CD8-positive, alpha-beta T cell (primary cell): ENCODE measurements at regions of chr2 and their contacts with region 1.

Region 1: DNA sequence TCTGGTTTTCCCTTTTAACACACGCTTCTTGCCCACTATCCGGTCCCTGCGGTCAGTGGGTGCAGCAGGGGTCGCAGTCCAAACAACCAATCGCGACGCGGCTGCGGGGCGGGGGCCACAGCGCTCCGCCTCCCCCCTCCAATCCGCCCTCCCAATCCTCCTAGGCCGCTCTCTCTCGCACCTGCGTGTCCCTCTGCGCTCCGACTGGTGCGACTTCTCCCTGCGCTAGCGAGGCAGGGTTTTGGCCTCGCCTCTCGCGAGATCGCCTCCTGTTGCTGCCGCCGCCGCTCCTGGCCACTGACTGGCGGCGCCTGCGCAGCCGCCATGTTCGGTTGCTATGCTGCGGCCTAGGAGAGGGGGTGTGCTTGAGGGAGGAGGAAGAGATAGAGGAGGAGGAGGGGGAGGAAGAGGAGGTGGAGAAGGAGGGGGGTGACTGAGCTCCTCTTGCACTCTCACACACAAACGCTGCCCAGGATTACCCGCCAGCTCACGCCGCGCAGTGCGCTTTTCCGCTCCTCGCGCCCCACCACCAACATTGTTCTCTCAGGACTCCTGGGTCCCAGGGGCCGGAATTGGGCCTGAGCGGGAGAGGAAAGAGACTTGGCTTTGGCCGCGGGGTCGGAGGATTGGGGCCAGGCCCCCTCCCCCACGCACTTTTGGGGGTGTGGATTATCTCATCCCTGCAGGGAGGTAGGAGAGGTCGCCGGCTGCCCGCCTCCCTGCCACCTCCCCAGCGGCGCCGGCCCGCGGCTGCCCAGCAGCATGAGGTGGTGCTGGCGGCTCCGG is at the start of gene PTPN4:
- DNase-seq: peak; percentile 91 to 99 (median 95)
- ATAC-seq: peak; percentile 90
- H3K4me3 ChIP-seq: peak within 1 kb of the TSS; percentile 83
- H3K4me3 Mint-ChIP-seq: peak within 1 kb of the TSS; percentile 95
- H3K27ac ChIP-seq: peak within 1 kb of the TSS; percentile 77 to 79
- H3K27ac Mint-ChIP-seq: peak within 1 kb of the TSS; percentile 96
- H3K4me1 ChIP-seq: peaks cover 31% of the 10 kb centered on the region
- H3K4me1 Mint-ChIP-seq: peaks cover 42% of the 10 kb centered on the region
- H3K27me3 ChIP-seq: no peaks in the 10 kb centered on the region
- H3K27me3 Mint-ChIP-seq: no peaks in the 10 kb centered on the region
- CTCF ChIP-seq: no peak
- total RNA-seq, gene PTPN4: 104 to 105 TPM

Region 2: GRCh38 chr2:119678998-119679710 is 80.5 kb before region 1 on chr2 and contains the start of gene TMEM177:
- CTCF ChIA-PET with region 1: interaction called, 3 read pairs
- POLR2A ChIA-PET with region 1: interaction called, 14 read pairs
- intact Hi-C with region 1: loop called (anchors 1 kb)
- DNase-seq: peak; percentile 77 to 93 (median 87)
- ATAC-seq: peak; percentile 86
- H3K4me3 ChIP-seq: peak within 1 kb of the TSS; percentile 71 to 90
- H3K4me3 Mint-ChIP-seq: peak within 1 kb of the TSS; percentile 89
- H3K27ac ChIP-seq: peak within 1 kb of the TSS; percentile 59 to 69
- H3K27ac Mint-ChIP-seq: peak within 1 kb of the TSS; percentile 92
- H3K4me1 ChIP-seq: peaks cover 18% of the 10 kb centered on the region
- H3K4me1 Mint-ChIP-seq: peaks cover 27% of the 10 kb centered on the region
- H3K27me3 ChIP-seq: no peaks in the 10 kb centered on the region
- H3K27me3 Mint-ChIP-seq: no peaks in the 10 kb centered on the region
- CTCF ChIP-seq: no peak
- total RNA-seq, gene TMEM177: 2.1 to 3.8 TPM

Region 3: GRCh38 chr2:119691189-119691588 is 68.5 kb before region 1 on chr2:
- CTCF ChIA-PET with region 1: no interaction called
- POLR2A ChIA-PET with region 1: no interaction called
- intact Hi-C with region 1: no loop called
- DNase-seq: no peak
- ATAC-seq: no peak
- H3K4me3 ChIP-seq: no peak overlapping the region
- H3K4me3 Mint-ChIP-seq: no peak overlapping the region
- H3K27ac ChIP-seq: no peak overlapping the region
- H3K27ac Mint-ChIP-seq: no peak overlapping the region
- H3K4me1 ChIP-seq: peaks cover 23% of the 10 kb centered on the region
- H3K4me1 Mint-ChIP-seq: peaks cover 25% of the 10 kb centered on the region
- H3K27me3 ChIP-seq: no peaks in the 10 kb centered on the region
- H3K27me3 Mint-ChIP-seq: no peaks in the 10 kb centered on the region
- CTCF ChIP-seq: no peak

Region 4: DNA sequence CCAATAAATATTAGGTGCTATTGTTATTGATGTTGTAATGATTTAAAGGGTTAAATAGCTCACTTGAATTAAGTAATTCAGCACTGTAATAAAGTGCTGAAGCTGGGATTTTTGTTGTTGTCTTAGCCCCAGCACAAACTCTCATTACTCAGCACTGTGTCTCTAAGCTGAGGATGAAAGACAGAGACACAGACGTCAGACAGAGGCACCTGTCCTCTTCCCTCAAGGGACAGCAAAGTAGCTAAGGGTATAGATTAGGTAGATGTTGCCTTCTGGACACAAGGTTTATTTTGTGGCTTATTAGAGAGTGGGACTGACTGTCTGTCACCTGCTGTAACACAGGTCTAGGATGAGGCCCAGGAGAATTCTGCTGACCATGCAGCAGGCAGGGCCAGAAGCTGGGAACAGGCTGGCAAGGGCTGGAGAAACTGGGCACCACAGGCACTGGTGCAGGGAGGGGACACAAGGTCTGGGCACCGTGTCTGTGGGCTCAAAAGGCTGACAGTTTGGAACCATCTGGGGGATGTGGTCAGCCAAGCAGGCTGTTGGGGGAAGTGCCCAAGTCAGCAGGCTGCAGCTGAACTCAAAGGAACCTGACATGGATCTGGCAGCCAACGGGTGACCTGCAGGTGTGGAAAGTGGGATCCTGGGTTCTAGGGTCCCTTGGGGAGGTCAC is 19.9 kb before region 1 on chr2:
- CTCF ChIA-PET with region 1: no interaction called
- POLR2A ChIA-PET with region 1: no interaction called
- intact Hi-C with region 1: no loop called
- DNase-seq: no peak
- ATAC-seq: no peak
- H3K4me3 ChIP-seq: no peak overlapping the region
- H3K4me3 Mint-ChIP-seq: no peak overlapping the region
- H3K27ac ChIP-seq: no peak overlapping the region
- H3K27ac Mint-ChIP-seq: no peak overlapping the region
- H3K4me1 ChIP-seq: no peaks in the 10 kb centered on the region
- H3K4me1 Mint-ChIP-seq: no peaks in the 10 kb centered on the region
- H3K27me3 ChIP-seq: no peaks in the 10 kb centered on the region
- H3K27me3 Mint-ChIP-seq: peaks cover 2% of the 10 kb centered on the region
- CTCF ChIP-seq: no peak

Region 5: GRCh38 chr2:119795309-119796303 is 36.0 kb after region 1 on chr2:
- CTCF ChIA-PET with region 1: no interaction called
- POLR2A ChIA-PET with region 1: interaction called, 3 read pairs
- intact Hi-C with region 1: loop called (anchors 5 kb)
- DNase-seq: no peak
- ATAC-seq: no peak
- H3K4me3 ChIP-seq: no peak overlapping the region
- H3K4me3 Mint-ChIP-seq: no peak overlapping the region
- H3K27ac ChIP-seq: no peak overlapping the region
- H3K27ac Mint-ChIP-seq: no peak overlapping the region
- H3K4me1 ChIP-seq: no peaks in the 10 kb centered on the region
- H3K4me1 Mint-ChIP-seq: peaks cover 51% of the 10 kb centered on the region
- H3K27me3 ChIP-seq: no peaks in the 10 kb centered on the region
- H3K27me3 Mint-ChIP-seq: no peaks in the 10 kb centered on the region
- CTCF ChIP-seq: no peak

Region 6: GRCh38 chr2:120012771-120013596 is 253.3 kb after region 1 on chr2 and contains the start of gene EPB41L5:
- CTCF ChIA-PET with region 1: no interaction called
- POLR2A ChIA-PET with region 1: no interaction called
- intact Hi-C with region 1: loop called (anchors 2 kb)
- DNase-seq: peak; percentile 50 to 88 (median 80)
- ATAC-seq: peak; percentile 92
- H3K4me3 ChIP-seq: peak within 1 kb of the TSS; percentile 68 to 82
- H3K4me3 Mint-ChIP-seq: peak within 1 kb of the TSS; percentile 85
- H3K27ac ChIP-seq: peak within 1 kb of the TSS; percentile 32 to 44
- H3K27ac Mint-ChIP-seq: peak within 1 kb of the TSS; percentile 62
- H3K4me1 ChIP-seq: peaks cover 18% of the 10 kb centered on the region
- H3K4me1 Mint-ChIP-seq: peaks cover 26% of the 10 kb centered on the region
- H3K27me3 ChIP-seq: no peaks in the 10 kb centered on the region
- H3K27me3 Mint-ChIP-seq: no peaks in the 10 kb centered on the region
- CTCF ChIP-seq: no peak
- total RNA-seq, gene EPB41L5: 5.1 to 5.8 TPM

Region 7: GRCh38 chr2:120231974-120232635 is 472.5 kb after region 1 on chr2:
- CTCF ChIA-PET with region 1: interaction called, 3 read pairs
- POLR2A ChIA-PET with region 1: interaction called, 4 read pairs
- intact Hi-C with region 1: loop called in 1 of 2 experiments (anchors 1 kb)
- DNase-seq: peak; percentile 27 to 90 (median 64)
- ATAC-seq: peak; percentile 91
- H3K4me3 ChIP-seq: peak overlapping the region; percentile 59 to 66
- H3K4me3 Mint-ChIP-seq: peak overlapping the region; percentile 93
- H3K27ac ChIP-seq: peak overlapping the region; percentile 60 to 84
- H3K27ac Mint-ChIP-seq: peak overlapping the region; percentile 92
- H3K4me1 ChIP-seq: peaks cover 39% of the 10 kb centered on the region
- H3K4me1 Mint-ChIP-seq: peaks cover 57% of the 10 kb centered on the region
- H3K27me3 ChIP-seq: no peaks in the 10 kb centered on the region
- H3K27me3 Mint-ChIP-seq: no peaks in the 10 kb centered on the region
- CTCF ChIP-seq: no peak